Mammary epithelial cell (primary cell): ENCODE measurements at regions of chr20 and their contacts with region 1.

Region 1: DNA sequence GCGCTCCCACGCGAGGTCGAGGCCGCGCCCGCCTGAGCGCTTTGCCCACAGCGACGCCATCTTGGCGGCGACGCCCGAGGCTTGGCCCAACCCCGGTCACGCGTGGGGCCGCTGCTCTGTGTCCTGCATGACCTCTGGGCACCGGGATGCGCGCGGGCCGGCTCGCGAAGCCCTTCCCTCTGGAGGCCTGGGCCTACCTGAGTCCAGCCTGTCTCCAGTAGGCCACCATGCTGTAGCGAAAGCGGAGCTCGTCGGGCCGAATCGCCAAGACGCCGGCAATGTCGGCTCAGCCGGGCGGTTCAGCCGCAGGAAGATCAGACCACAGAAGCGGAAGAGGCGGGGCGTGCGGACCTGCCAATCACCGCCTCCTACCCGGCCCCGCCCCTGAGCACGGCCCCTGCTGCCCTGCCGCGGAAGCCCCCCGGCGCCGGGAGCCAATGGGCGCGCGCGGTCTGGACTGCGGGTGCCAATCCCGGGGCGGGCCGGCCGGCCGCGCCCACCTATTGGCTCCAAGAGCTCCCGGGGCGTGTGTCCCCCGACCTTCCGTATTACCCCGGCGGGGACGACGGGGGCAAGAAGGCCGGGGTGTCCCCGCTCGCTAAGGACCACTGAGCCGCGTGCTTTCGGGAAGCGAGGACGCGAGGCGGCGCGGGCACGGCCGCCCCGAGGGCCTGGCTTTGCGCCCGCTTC is at the start of gene ATP5F1E:
- DNase-seq: peak; percentile 94
- H3K4me3 ChIP-seq: peak within 1 kb of the TSS; percentile 87 to 93 (median 93)
- H3K27ac ChIP-seq: peak within 1 kb of the TSS; percentile 72
- H3K4me1 ChIP-seq: peaks cover 32% of the 10 kb centered on the region
- H3K27me3 ChIP-seq: no peaks in the 10 kb centered on the region
- CTCF ChIP-seq: no peak
- total RNA-seq, gene ATP5F1E: 13.7 to 75.4 TPM

Region 2: DNA sequence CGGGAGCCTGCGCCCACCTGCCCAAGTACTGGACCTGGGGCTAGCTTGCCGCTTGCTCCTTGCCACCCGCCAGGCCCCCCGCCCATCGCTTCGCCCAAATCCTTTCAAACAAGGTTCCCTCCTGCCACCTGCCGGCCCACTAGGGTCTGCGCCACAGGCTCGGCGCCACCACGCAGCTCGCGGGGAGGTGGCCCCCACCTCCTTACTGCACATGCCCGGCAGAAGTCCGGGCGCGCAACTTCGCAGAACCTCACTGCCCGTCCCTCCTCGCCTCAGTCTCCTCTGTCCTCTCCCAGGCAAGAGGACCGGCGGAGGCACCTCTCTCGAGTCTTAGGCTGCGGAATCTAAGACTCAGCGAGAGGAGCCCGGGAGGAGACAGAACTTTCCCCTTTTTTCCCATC is 192.7 kb before region 1 on chr20:
- CTCF ChIA-PET with region 1: no interaction called
- dilution Hi-C with region 1: no loop called
- in situ Hi-C with region 1: no loop called
- intact Hi-C with region 1: no loop called
- DNase-seq: peak; percentile 16
- H3K4me3 ChIP-seq: peak overlapping the region; percentile 6 to 24 (median 22)
- H3K27ac ChIP-seq: no peak overlapping the region
- H3K4me1 ChIP-seq: no peaks in the 10 kb centered on the region
- H3K27me3 ChIP-seq: peaks cover 9% of the 10 kb centered on the region
- CTCF ChIP-seq: peak in 1 of 2 donors; percentile 54

Region 3: GRCh38 chr20:58864350-58864749 is 167.8 kb before region 1 on chr20:
- CTCF ChIA-PET with region 1: interaction called, 11 read pairs
- dilution Hi-C with region 1: no loop called
- in situ Hi-C with region 1: no loop called
- intact Hi-C with region 1: no loop called
- DNase-seq: no peak
- H3K4me3 ChIP-seq: no peak overlapping the region
- H3K27ac ChIP-seq: no peak overlapping the region
- H3K4me1 ChIP-seq: no peaks in the 10 kb centered on the region
- H3K27me3 ChIP-seq: peaks cover 9% of the 10 kb centered on the region
- CTCF ChIP-seq: peak in 1 of 2 donors; percentile 42

Region 4: GRCh38 chr20:58944589-58945008 is 87.6 kb before region 1 on chr20:
- CTCF ChIA-PET with region 1: no interaction called
- dilution Hi-C with region 1: no loop called
- in situ Hi-C with region 1: no loop called
- intact Hi-C with region 1: no loop called
- DNase-seq: no peak
- H3K4me3 ChIP-seq: no peak overlapping the region
- H3K27ac ChIP-seq: no peak overlapping the region
- H3K4me1 ChIP-seq: no peaks in the 10 kb centered on the region
- H3K27me3 ChIP-seq: no peaks in the 10 kb centered on the region
- CTCF ChIP-seq: no peak

Region 5: GRCh38 chr20:58995461-58996225 is 36.5 kb before region 1 on chr20:
- CTCF ChIA-PET with region 1: no interaction called
- dilution Hi-C with region 1: no loop called
- in situ Hi-C with region 1: no loop called
- intact Hi-C with region 1: loop called (anchors 5 kb)
- DNase-seq: peak; percentile 5
- H3K4me3 ChIP-seq: no peak overlapping the region
- H3K27ac ChIP-seq: no peak overlapping the region
- H3K4me1 ChIP-seq: no peaks in the 10 kb centered on the region
- H3K27me3 ChIP-seq: no peaks in the 10 kb centered on the region
- CTCF ChIP-seq: no peak

Region 6: GRCh38 chr20:59006864-59007664 is 25.1 kb before region 1 on chr20 and contains the start of gene CTSZ:
- CTCF ChIA-PET with region 1: no interaction called
- dilution Hi-C with region 1: no loop called
- in situ Hi-C with region 1: no loop called
- intact Hi-C with region 1: loop called (anchors 1 kb)
- DNase-seq: peak; percentile 13
- H3K4me3 ChIP-seq: peak within 1 kb of the TSS; percentile 53 to 70 (median 58)
- H3K27ac ChIP-seq: peak within 1 kb of the TSS; percentile 40
- H3K4me1 ChIP-seq: peaks cover 44% of the 10 kb centered on the region
- H3K27me3 ChIP-seq: no peaks in the 10 kb centered on the region
- CTCF ChIP-seq: peak in 1 of 2 donors; percentile 2
- total RNA-seq, gene CTSZ: 138 to 139 TPM

Region 7: DNA sequence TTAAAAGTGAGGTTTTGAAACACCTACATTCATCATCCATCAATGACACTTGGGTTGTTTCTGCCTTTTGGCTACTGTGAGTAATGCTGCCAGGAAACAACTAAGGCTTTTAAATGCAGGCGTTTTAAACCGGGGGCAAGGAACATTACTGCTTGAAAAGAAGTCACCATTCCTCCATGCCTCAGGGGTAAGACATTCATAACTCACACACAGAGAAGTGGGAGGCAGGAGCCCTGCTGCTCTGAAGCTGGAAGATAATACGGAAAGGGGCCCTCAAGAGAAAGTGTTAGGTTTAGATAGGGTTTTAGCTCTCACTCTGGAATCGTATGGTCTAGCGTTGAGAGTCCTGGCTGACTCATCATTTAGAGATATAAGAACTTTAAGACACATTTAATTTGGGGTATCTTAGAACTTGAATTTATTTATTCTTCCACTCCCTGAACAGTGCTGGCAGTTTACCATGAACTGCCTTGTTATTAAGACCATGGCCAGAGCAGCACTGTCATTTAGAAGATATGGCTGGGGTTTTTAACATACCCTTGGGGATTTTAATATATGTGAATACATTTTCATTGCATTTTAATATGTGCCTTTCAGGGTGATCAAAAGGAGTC is 11.1 kb before region 1 on chr20:
- CTCF ChIA-PET with region 1: no interaction called
- dilution Hi-C with region 1: no loop called
- in situ Hi-C with region 1: no loop called
- intact Hi-C with region 1: loop called (anchors 1 kb)
- DNase-seq: peak; percentile 84
- H3K4me3 ChIP-seq: no peak overlapping the region
- H3K27ac ChIP-seq: peak overlapping the region; percentile 1
- H3K4me1 ChIP-seq: peaks cover 24% of the 10 kb centered on the region
- H3K27me3 ChIP-seq: no peaks in the 10 kb centered on the region
- CTCF ChIP-seq: no peak

Region 8: DNA sequence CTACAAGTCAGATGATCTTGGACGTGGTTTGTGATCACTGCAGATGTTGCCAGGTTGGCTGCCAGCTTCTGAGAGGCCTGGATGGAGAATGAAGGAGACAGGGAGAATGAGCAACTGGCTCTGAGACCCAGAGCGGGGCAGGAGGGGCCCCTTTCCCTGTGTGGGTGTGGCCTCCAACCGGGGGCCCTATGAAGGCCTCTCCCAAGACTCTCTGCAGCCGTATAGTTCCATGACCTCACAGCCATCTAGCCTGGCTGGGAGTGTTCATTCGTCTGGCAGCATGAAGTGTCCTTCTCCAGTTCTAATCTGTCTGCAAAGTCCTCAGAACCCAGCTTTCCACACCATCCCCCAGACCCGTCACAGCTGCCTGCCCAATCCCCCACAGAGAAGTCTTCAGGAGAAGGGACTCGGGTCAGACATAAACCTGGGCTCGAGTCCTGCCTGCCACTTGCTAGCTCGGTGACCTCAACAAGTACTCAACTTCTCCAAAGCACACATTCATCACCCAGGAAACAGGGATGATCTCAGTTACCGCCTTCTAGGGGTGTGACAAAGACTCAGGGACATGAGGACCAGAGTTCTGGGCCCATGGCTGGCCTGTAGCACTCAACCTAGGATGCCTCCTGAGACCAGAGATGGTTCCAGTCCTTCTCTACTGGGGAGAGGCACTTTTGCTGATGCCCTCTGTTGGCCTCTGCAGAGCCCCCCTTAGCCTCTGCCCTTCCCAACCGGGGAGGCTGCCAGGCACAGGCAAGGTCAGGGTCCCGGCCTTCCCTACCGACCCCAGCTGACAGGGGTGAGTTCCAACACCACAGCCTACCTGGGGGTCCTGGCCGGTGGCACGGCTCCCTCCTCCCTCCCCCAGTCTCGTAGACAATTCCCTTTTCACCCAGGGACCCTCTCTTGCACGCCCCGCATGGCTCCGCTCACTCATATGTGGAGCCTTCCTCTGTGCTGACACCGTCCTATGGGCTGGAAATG is 391.0 kb after region 1 on chr20:
- CTCF ChIA-PET with region 1: no interaction called
- dilution Hi-C with region 1: no loop called
- in situ Hi-C with region 1: no loop called
- intact Hi-C with region 1: no loop called
- DNase-seq: no peak
- H3K4me3 ChIP-seq: no peak overlapping the region
- H3K27ac ChIP-seq: no peak overlapping the region
- H3K4me1 ChIP-seq: no peaks in the 10 kb centered on the region
- H3K27me3 ChIP-seq: no peaks in the 10 kb centered on the region
- CTCF ChIP-seq: no peak